ENCODE measurements at regions of chr20 and their contacts with region 1.

Region 1: DNA sequence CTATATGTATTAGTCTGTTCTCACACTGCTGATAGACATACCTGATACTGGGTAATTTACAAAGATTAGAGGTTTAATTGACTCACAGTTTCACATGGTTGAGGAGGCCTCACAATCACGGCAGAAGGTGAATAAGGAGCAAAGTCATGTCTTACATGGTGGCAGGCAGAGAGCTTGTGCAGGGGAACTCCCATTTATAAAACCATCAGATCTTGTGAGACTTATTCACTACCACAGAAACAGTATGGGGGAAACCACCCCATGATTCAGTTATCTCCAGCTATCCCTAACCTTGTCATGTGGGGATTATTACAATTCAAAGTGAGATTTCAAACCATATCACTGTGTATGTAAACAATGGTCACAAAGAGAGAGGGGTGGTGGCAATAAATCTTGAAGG is 6.6 kb downstream of the CST8 start:
- DNase-seq: peak; percentile 35
- H3K4me3 Mint-ChIP-seq: no peak overlapping the region
- H3K27ac Mint-ChIP-seq: no peak overlapping the region
- H3K4me1 Mint-ChIP-seq: peaks cover 6% of the 10 kb centered on the region
- H3K27me3 Mint-ChIP-seq: peaks cover 23% of the 10 kb centered on the region

Region 2: GRCh38 chr20:23513164-23513563 is 15.6 kb after region 1 on chr20:
- CTCF ChIA-PET with region 1: no interaction called
- POLR2A ChIA-PET with region 1: no interaction called
- intact Hi-C with region 1: no loop called
- DNase-seq: no peak
- H3K4me3 Mint-ChIP-seq: no peak overlapping the region
- H3K27ac Mint-ChIP-seq: no peak overlapping the region
- H3K4me1 Mint-ChIP-seq: no peaks in the 10 kb centered on the region
- H3K27me3 Mint-ChIP-seq: peaks cover 4% of the 10 kb centered on the region

Region 3: GRCh38 chr20:23528867-23529431 is 31.4 kb after region 1 on chr20:
- CTCF ChIA-PET with region 1: no interaction called
- POLR2A ChIA-PET with region 1: no interaction called
- intact Hi-C with region 1: loop called (anchors 1 kb)
- DNase-seq: no peak
- H3K4me3 Mint-ChIP-seq: no peak overlapping the region
- H3K27ac Mint-ChIP-seq: no peak overlapping the region
- H3K4me1 Mint-ChIP-seq: peaks cover 2% of the 10 kb centered on the region
- H3K27me3 Mint-ChIP-seq: peaks cover 9% of the 10 kb centered on the region

Measured in activated CD4-positive, alpha-beta memory T cell treated with anti-CD3 and anti-CD28 coated beads for 36 hours (primary cell).